H1 (cell line): ENCODE measurements at regions of chr20 and their contacts with region 1.

Region 1: GRCh38 chr20:33211817-33212424 is 5.2 kb upstream of the BPIFA3 start:
- DNase-seq: peak; percentile 39 to 64
- H3K4me3 ChIP-seq: no peak overlapping the region
- H3K27ac ChIP-seq: no peak overlapping the region
- H3K4me1 ChIP-seq: 0 out of 7 replicates have a peak, but pooled peaks cover 0 to 2% (median 0%) of the 10 kb centered on the region in 4 experiments
- H3K27me3 ChIP-seq: peaks cover 0 to 3% (median 1%) of the 10 kb centered on the region in 4 experiments; a peak in 4 of 7 replicates
- CTCF ChIP-seq: peak; percentile 72 to 88 (median 87)
- EP300 ChIP-seq: no peak
- POLR2A ChIP-seq: no peak
- RAD21 ChIP-seq: peak; percentile 81 to 85

Region 2: DNA sequence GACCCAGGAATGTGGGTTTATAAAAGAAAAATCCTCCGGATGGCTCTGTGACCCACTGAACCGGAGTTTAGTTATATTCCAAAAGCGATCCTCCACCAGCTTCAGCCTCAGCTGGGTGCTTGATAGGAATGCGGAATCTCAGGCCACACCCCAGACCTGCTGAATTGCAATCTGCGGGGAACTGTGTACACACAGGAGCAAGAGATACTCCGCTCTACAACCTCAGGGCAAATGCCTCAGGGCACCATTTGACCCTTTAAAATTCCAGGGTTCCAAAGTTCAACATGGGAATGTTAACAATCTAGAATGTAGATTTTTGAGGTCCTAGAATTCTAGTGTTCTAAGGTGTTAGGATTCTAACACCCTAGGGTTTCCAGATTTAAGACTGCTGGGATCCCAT is 33.2 kb before region 1 on chr20:
- CTCF ChIA-PET with region 1: interaction called, 12 read pairs
- POLR2A ChIA-PET with region 1: no interaction called
- DNase-seq: peak in 1 of 2 experiments; percentile 19
- H3K4me3 ChIP-seq: no peak overlapping the region
- H3K27ac ChIP-seq: no peak overlapping the region
- H3K4me1 ChIP-seq: peaks cover 0 to 3% (median 2%) of the 10 kb centered on the region in 4 experiments; a peak in 3 of 7 replicates
- H3K27me3 ChIP-seq: no peaks in the 10 kb centered on the region
- CTCF ChIP-seq: no peak
- EP300 ChIP-seq: no peak
- POLR2A ChIP-seq: no peak
- RAD21 ChIP-seq: no peak

Region 3: GRCh38 chr20:33199026-33199425 is 12.9 kb before region 1 on chr20:
- CTCF ChIA-PET with region 1: interaction called, 14 read pairs
- POLR2A ChIA-PET with region 1: no interaction called
- DNase-seq: no peak
- H3K4me3 ChIP-seq: no peak overlapping the region
- H3K27ac ChIP-seq: no peak overlapping the region
- H3K4me1 ChIP-seq: no peaks in the 10 kb centered on the region
- H3K27me3 ChIP-seq: no peaks in the 10 kb centered on the region
- CTCF ChIP-seq: no peak
- EP300 ChIP-seq: no peak
- POLR2A ChIP-seq: no peak
- RAD21 ChIP-seq: no peak

Region 4: GRCh38 chr20:33233129-33233774 is 21.3 kb after region 1 on chr20:
- CTCF ChIA-PET with region 1: interaction called, 38 read pairs
- POLR2A ChIA-PET with region 1: no interaction called
- DNase-seq: peak; percentile 21 to 54
- H3K4me3 ChIP-seq: no peak overlapping the region
- H3K27ac ChIP-seq: no peak overlapping the region
- H3K4me1 ChIP-seq: 0 out of 7 replicates have a peak, but pooled peaks cover 0 to 3% (median 0%) of the 10 kb centered on the region in 4 experiments
- H3K27me3 ChIP-seq: no peaks in the 10 kb centered on the region
- CTCF ChIP-seq: peak; percentile 66 to 79 (median 77)
- EP300 ChIP-seq: no peak
- POLR2A ChIP-seq: no peak
- RAD21 ChIP-seq: peak; percentile 74 to 87